IMR-90 (cell line): ENCODE measurements at regions of chr15 and their contacts with region 1.

Region 1: DNA sequence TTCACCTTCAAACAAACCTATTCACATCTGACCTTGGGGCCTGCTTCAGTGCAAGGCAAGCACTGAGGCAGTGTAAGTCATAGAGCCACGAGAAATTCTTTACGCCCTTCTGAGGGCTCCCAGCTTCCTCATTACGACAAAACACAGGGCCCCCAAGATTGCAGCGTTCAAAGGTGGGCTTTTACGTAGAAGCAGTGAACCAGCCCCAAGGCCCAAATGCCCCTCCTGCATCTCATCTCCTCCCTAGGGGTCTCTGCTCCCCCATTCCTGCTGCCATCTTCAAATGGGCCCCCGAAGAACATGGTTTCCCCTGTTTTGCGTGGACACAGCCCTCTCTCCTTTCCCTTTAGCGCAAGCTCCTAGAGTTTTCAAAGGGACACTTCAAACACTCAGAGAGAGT is 285.1 kb downstream of the MEX3B start:
- DNase-seq: no peak
- ATAC-seq: no peak
- H3K4me3 ChIP-seq: no peak overlapping the region
- H3K27ac ChIP-seq: no peak overlapping the region
- H3K4me1 ChIP-seq: no peaks in the 10 kb centered on the region
- H3K27me3 ChIP-seq: peaks cover 3% of the 10 kb centered on the region
- CTCF ChIP-seq: no peak
- POLR2A ChIP-seq: no peak
- RAD21 ChIP-seq: no peak

Region 2: DNA sequence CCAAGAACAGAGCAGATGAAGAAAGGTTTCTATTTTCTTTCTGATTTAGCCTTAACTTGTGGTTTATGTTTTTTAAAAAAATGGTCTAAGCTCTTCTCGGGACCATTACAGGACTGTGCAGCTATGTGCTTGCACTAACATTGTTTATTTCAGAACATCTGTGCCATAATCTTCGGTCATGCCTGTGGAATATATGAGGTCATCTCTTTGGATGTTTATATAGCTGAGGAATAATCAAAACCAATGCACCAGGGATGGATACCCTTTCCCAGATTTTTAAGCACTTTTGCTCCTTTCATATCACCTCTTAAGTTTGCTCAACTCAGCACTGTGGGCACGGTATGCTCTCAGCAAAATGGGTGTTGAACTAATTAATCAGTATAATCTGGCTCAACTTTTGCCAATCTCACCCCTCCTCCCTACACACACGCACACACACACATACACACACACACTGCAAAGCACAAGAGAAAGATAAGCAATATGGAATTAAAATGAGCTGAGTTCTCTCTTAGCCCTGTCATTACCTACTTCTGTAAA is 118.2 kb before region 1 on chr15:
- CTCF ChIA-PET with region 1: no interaction called
- POLR2A ChIA-PET with region 1: no interaction called
- dilution Hi-C with region 1: no loop called
- in situ Hi-C with region 1: no loop called
- intact Hi-C with region 1: no loop called
- DNase-seq: peak; percentile 97
- ATAC-seq: peak; percentile 95
- H3K4me3 ChIP-seq: no peak overlapping the region
- H3K27ac ChIP-seq: peak overlapping the region; percentile 93; the same call in 1 of the 2 replicates
- H3K4me1 ChIP-seq: peaks cover 11% of the 10 kb centered on the region
- H3K27me3 ChIP-seq: no peaks in the 10 kb centered on the region
- CTCF ChIP-seq: no peak
- POLR2A ChIP-seq: no peak
- RAD21 ChIP-seq: no peak

Region 3: DNA sequence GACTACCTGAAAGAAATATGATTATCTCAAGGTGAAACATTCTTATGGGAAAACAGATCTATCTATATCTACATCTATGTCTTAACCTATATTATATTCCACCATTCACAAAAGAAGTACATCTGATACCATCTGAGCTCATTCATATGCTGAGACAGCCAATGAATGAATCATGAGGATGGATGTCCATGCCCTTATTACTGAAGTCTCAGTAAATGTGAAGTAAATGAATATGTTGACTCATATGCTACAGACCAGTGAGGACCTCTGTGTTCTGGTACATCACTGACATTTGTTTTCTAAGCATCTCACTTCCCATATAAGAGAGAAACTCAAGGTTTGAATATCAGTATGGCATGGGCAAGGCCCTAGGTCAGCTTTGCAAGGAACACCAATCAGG is 75.4 kb before region 1 on chr15:
- CTCF ChIA-PET with region 1: no interaction called
- POLR2A ChIA-PET with region 1: no interaction called
- dilution Hi-C with region 1: no loop called
- in situ Hi-C with region 1: no loop called
- intact Hi-C with region 1: loop called (anchors 1 kb)
- DNase-seq: no peak
- ATAC-seq: no peak
- H3K4me3 ChIP-seq: no peak overlapping the region
- H3K27ac ChIP-seq: no peak overlapping the region
- H3K4me1 ChIP-seq: no peaks in the 10 kb centered on the region
- H3K27me3 ChIP-seq: no peaks in the 10 kb centered on the region
- CTCF ChIP-seq: no peak
- POLR2A ChIP-seq: no peak
- RAD21 ChIP-seq: no peak